AG04450 (cell line): ENCODE measurements at regions of chr13 and their contacts with region 1.

Region 1: GRCh38 chr13:97109841-97110492 is 112.2 kb upstream of the MBNL2 start:
- DNase-seq: no peak
- H3K4me3 ChIP-seq: no peak overlapping the region
- H3K27ac ChIP-seq: no peak overlapping the region
- H3K27me3 ChIP-seq: no peaks in the 10 kb centered on the region
- CTCF ChIP-seq: peak; percentile 89

Region 2: DNA sequence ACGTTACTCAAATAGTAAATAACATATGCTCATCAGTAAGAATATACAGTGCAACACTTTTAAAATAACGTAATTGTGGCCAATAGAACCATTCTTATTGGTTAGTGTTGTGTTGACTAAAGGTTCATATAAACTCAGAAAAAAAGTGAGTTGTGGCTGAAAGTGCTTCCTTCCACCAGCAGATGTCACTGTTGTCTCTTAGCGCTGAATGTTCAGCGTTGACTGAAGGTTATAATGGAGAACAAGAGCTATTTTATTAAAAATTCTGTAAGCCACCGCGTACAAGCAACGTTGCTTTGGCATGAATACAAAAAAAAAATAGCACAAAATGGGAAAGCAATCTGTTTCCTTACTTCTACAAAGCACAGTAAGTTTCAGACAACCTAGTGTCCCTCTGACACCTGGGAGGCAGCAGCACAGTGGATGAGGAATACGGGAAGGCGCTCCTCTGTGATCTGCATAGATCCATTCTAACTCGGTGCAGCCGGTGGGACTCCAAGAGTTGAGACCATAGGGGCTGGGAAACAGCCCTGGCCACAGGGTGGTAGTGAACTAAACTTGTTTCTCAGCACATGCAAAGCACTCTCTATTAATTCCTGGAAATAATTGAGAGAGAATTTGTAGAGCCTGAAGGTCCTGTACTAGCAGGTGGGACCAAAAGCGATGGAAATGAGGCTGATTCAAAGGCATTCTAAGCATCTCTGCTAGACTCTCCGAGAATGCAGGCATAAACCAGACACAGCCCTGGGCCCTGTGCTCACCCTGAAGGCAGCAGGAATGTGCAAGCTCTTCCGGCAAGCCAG is 91.7 kb before region 1 on chr13:
- CTCF ChIA-PET with region 1: interaction called, 15 read pairs
- POLR2A ChIA-PET with region 1: no interaction called
- DNase-seq: peak; percentile 32
- H3K4me3 ChIP-seq: no peak overlapping the region
- H3K27ac ChIP-seq: no peak overlapping the region
- H3K27me3 ChIP-seq: peaks cover 7% of the 10 kb centered on the region
- CTCF ChIP-seq: peak; percentile 93

Region 3: GRCh38 chr13:97205982-97206381 is 96.0 kb after region 1 on chr13:
- CTCF ChIA-PET with region 1: interaction called, 114 read pairs
- POLR2A ChIA-PET with region 1: no interaction called
- DNase-seq: no peak
- H3K4me3 ChIP-seq: no peak overlapping the region
- H3K27ac ChIP-seq: no peak overlapping the region
- H3K27me3 ChIP-seq: no peaks in the 10 kb centered on the region
- CTCF ChIP-seq: no peak

Region 4: DNA sequence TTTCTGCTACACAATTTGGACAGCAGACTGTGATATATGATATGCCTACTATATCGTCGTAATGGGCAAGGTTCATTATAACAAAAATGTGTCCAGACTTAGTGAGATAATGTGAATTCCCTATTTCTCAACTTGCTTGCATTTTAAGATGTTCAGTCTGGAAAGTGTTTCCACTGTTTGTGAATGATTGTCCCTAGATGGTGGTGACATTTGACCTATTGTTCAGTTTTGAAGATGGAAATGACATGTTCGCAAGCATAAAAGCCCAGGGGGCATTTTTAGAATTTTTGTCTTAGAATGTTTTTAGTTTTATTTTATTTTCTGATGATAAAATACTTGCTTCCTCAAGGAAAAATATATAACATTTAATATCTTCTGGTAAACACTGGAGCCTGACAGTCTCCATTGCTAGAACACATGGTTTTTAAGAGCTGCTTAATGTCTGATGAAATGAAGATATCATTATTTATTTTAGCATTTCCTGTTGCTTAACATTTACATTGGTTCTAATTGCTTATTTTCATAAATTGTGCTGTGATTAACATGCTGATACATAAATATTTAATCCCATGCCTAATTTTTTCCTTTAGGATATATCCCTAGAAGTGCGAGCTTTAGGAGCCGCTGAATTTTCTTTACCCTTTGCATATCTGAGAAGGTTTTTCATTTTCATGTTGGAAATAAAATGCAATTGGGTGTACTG is 139.3 kb after region 1 on chr13:
- CTCF ChIA-PET with region 1: interaction called, 19 read pairs
- POLR2A ChIA-PET with region 1: no interaction called
- DNase-seq: no peak
- H3K4me3 ChIP-seq: no peak overlapping the region
- H3K27ac ChIP-seq: no peak overlapping the region
- H3K27me3 ChIP-seq: no peaks in the 10 kb centered on the region
- CTCF ChIP-seq: no peak

Region 5: GRCh38 chr13:97313551-97314260 is 203.7 kb after region 1 on chr13:
- CTCF ChIA-PET with region 1: interaction called, 11 read pairs
- POLR2A ChIA-PET with region 1: no interaction called
- DNase-seq: no peak
- H3K4me3 ChIP-seq: no peak overlapping the region
- H3K27ac ChIP-seq: no peak overlapping the region
- H3K27me3 ChIP-seq: no peaks in the 10 kb centered on the region
- CTCF ChIP-seq: no peak

Region 6: DNA sequence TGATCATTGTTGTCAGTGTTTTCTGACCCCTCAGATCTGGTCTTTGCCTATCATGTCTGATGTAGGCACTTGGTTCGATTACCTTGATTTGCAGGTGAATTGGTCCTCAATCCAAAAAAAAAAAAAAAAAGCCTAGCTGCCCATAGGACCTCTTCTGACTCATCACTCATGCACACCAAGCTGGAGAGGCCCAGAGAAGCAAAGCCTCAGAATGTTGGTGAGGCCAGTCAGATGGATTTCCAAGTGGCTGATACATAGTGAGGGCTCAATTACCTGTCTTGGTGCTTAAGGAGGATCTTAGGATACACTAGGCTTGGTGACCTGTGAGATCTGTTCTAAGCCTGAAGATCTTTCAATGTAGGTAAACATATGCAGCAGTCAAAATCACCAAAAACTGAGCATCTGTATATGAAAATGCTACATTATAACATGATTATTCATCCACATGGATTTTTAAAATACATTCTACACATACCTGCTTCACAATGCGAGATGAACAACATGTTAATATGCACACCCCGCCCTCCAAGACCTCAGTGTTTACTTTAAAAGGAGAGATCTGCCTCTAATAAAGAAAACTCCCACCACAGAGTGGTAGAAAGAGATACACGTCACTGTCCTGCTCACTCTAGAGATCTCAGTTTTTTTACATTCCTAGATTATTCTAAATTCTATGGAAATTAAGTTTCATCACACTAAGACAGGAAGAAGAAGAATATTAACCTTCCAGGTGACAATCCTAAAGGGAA is 244.1 kb after region 1 on chr13:
- CTCF ChIA-PET with region 1: interaction called, 84 read pairs
- POLR2A ChIA-PET with region 1: interaction called, 7 read pairs
- DNase-seq: peak; percentile 26
- H3K4me3 ChIP-seq: no peak overlapping the region
- H3K27ac ChIP-seq: no peak overlapping the region
- H3K27me3 ChIP-seq: no peaks in the 10 kb centered on the region
- CTCF ChIP-seq: no peak

Region 7: GRCh38 chr13:97432917-97433726 is 323.2 kb after region 1 on chr13:
- CTCF ChIA-PET with region 1: interaction called, 21 read pairs
- POLR2A ChIA-PET with region 1: interaction called, 3 read pairs
- DNase-seq: peak; percentile 100
- H3K4me3 ChIP-seq: peak overlapping the region; percentile 88
- H3K27ac ChIP-seq: peak overlapping the region; percentile 100
- H3K27me3 ChIP-seq: no peaks in the 10 kb centered on the region
- CTCF ChIP-seq: no peak